GM10248 (cell line): ENCODE measurements at regions of chr7 and their contacts with region 1.

Region 1: GRCh38 chr7:88101769-88102168 is 118.1 kb downstream of the SRI start:
- DNase-seq: no peak
- CTCF ChIP-seq: no peak

Region 2: GRCh38 chr7:88090671-88091070 is 11.1 kb before region 1 on chr7:
- CTCF ChIA-PET with region 1: interaction called, 10 read pairs
- POLR2A ChIA-PET with region 1: no interaction called
- DNase-seq: no peak
- CTCF ChIP-seq: no peak

Region 3: DNA sequence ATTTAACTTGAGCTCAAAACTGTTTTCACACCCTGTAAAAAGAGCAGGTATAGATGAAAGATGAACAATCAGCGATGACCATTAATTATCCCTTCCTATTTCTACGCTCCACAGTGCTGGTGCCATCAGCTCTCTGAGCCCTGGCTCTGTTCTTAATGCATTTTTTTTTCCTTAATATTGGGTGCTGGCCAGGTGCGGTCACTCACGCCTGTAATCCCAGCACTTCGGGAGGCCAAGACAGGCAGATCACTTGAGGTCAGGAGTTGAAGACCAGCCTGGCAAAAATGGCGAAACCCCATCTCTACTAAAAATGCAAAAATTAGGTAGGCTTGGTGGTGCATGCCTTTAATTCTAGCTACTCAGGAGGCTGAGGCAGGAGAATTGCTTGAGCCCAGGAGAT is 200.7 kb after region 1 on chr7:
- CTCF ChIA-PET with region 1: no interaction called
- POLR2A ChIA-PET with region 1: no interaction called
- DNase-seq: no peak
- CTCF ChIP-seq: no peak